ENCODE measurements at regions of chr5 and their contacts with region 1.

Region 1: DNA sequence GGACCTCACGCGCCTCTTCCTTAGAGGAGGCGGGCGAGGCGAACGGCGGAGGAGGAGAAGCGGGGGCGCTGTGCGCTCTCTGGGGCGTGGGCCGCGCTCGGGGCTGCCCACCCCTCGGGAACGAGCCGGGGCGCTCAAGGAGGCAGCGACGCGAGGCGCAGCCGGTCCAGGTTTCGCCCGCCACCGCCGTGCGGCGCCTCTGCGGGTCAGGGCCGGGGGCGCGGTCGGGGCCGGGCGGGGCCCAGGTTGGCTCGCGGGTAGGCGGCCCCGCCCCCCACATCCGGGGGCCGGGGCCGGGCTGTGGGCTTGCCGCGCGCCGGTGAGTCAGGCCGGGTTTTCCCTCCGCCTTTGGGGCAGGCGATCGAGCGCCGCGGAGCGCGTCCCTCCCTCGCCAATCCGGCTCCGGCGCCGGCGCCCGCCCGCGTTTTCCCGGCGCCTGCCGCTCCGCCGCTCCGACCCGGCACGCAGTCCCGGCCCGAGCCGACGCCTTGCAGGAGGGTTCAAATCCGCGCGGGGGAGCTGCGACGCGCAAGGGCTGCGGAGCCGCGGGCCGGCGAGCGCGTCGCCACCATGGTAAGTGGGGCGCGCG is at the start of gene N4BP3:
- DNase-seq: peak; percentile 88
- H3K4me3 Mint-ChIP-seq: peak within 1 kb of the TSS; percentile 88
- H3K27ac Mint-ChIP-seq: no peak within 1 kb of the TSS
- H3K4me1 Mint-ChIP-seq: peaks cover 31% of the 10 kb centered on the region
- H3K27me3 Mint-ChIP-seq: no peaks in the 10 kb centered on the region
- total RNA-seq, gene N4BP3: 1.4 to 1.6 TPM

Region 2: GRCh38 chr5:178130604-178131485 is 17.6 kb after region 1 on chr5 and contains the start of gene RMND5B:
- CTCF ChIA-PET with region 1: no interaction called
- intact Hi-C with region 1: loop called (anchors 1 kb)
- DNase-seq: peak; percentile 85
- H3K4me3 Mint-ChIP-seq: peak within 1 kb of the TSS; percentile 85
- H3K27ac Mint-ChIP-seq: peak within 1 kb of the TSS; percentile 84
- H3K4me1 Mint-ChIP-seq: peaks cover 30% of the 10 kb centered on the region
- H3K27me3 Mint-ChIP-seq: no peaks in the 10 kb centered on the region
- total RNA-seq, gene RMND5B: 26.0 to 26.7 TPM

Region 3: DNA sequence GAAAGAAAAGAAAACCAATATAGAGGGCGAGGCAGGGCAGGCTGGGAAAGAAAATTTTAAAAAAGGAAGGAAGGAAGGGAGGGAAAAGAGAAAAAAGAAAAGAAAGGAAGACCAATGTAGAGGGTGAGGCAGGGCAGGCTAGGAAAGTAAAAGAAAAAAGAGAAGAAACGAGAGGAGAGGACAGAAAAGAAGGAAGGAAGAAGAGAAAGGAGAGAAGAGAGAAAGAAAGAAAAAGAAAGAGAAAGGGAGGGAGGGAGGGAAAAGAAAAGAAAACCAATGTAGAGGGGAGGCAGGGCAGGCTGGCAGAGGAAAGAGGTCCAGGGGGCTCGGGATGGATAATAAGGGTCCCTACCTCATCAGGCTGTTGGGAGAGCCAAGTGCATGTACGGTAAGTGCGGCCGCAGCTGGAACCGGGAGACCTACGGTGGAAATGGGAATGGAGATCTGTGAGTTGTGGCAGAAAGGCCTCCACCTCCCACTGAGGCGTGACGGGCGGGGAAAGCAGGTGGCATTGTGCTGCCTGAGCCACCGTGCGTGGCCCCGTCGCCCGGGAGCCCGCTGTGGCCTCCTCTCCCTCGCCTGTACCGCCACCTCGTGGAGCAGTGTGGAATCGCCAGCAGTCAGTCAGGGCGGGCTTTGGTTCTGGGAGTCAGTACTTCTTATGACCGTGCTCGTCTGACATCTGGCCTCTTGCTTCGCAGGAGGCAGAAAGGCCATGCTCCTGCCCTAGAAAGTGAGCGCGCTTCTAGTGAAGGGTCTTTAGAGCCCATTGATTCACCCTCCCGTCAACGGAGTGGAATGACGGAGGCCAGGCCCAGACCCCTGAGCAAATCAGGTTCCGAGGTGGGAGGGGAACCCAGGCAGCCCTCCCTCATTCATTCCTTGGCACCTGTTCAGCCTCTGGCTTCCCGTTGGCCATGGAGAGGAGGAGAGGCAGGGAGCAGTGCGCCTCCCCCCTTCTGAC is 50.8 kb after region 1 on chr5:
- CTCF ChIA-PET with region 1: no interaction called
- intact Hi-C with region 1: no loop called
- DNase-seq: peak; percentile 95
- H3K4me3 Mint-ChIP-seq: peak overlapping the region; percentile 38
- H3K27ac Mint-ChIP-seq: no peak overlapping the region
- H3K4me1 Mint-ChIP-seq: peaks cover 2% of the 10 kb centered on the region
- H3K27me3 Mint-ChIP-seq: peaks cover 11% of the 10 kb centered on the region

Region 4: DNA sequence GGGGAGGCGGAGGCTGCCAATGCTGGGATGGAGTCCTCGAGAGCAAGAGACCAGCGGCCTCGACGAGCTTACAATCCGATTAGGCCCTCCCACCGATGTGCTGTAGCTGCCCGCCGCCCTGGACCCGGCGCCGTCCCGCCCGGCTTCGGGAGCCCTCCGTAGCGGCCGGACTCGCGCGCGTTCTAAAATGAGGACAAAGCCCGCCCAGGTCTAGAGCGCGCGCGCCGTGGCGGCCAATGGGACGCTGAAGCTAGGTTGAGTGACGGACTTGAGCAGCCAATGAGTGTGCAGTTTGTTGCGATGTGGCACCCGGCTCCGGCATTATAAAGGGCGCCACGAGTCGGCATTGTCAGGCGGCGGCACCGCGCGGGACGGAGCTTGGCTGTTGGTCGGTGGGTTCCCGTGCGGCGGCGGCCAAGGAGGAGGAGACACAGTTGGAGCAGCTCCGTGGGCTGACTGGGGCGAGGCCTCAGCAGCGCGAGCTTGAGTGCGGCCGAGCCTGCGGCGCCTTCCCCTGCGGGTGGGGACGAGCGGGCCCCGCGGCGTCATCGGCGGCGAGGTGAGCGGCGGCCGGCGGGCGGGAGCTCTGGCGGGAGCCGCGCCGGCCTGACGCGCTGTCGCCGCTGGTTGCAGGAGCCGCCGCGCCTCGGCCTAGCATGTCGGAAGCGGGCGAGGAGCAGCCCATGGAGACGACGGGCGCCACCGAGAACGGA is 91.0 kb after region 1 on chr5 and contains the start of gene HNRNPAB:
- CTCF ChIA-PET with region 1: no interaction called
- intact Hi-C with region 1: loop called (anchors 1 kb)
- DNase-seq: peak; percentile 96
- H3K4me3 Mint-ChIP-seq: peak within 1 kb of the TSS; percentile 96
- H3K27ac Mint-ChIP-seq: peak within 1 kb of the TSS; percentile 97
- H3K4me1 Mint-ChIP-seq: peaks cover 31% of the 10 kb centered on the region
- H3K27me3 Mint-ChIP-seq: peaks cover 2% of the 10 kb centered on the region
- total RNA-seq, gene HNRNPAB: 251 to 262 TPM